IMR-90 (cell line): ENCODE measurements at regions of chr1 and their contacts with region 1.

Region 1: GRCh38 chr1:171313835-171314320 is at the start of gene FMO4:
- DNase-seq: peak; percentile 99
- ATAC-seq: peak; percentile 100
- H3K4me3 ChIP-seq: no peak within 1 kb of the TSS
- H3K27ac ChIP-seq: no peak within 1 kb of the TSS
- H3K4me1 ChIP-seq: 0 out of 2 replicates have a peak, but pooled peaks cover 2% of the 10 kb centered on the region
- H3K27me3 ChIP-seq: no peaks in the 10 kb centered on the region
- CTCF ChIP-seq: peak; percentile 92
- POLR2A ChIP-seq: no peak
- RAD21 ChIP-seq: peak; percentile 62
- total RNA-seq, gene FMO4: 0.36 and 0.56 TPM in 2 replicates

Region 2: GRCh38 chr1:170967042-170967910 is 346.6 kb before region 1 on chr1:
- CTCF ChIA-PET with region 1: interaction called, 26 read pairs
- POLR2A ChIA-PET with region 1: no interaction called
- dilution Hi-C with region 1: no loop called
- in situ Hi-C with region 1: no loop called
- intact Hi-C with region 1: loop called (anchors 1 kb)
- DNase-seq: peak; percentile 63
- ATAC-seq: peak; percentile 94
- H3K4me3 ChIP-seq: no peak overlapping the region
- H3K27ac ChIP-seq: no peak overlapping the region
- H3K4me1 ChIP-seq: no peaks in the 10 kb centered on the region
- H3K27me3 ChIP-seq: no peaks in the 10 kb centered on the region
- CTCF ChIP-seq: peak; percentile 68
- POLR2A ChIP-seq: no peak
- RAD21 ChIP-seq: peak; percentile 60

Region 3: GRCh38 chr1:171141688-171142415 is 172.0 kb before region 1 on chr1:
- CTCF ChIA-PET with region 1: no interaction called
- POLR2A ChIA-PET with region 1: no interaction called
- dilution Hi-C with region 1: no loop called
- in situ Hi-C with region 1: no loop called
- intact Hi-C with region 1: loop called (anchors 5 kb)
- DNase-seq: peak; percentile 96
- ATAC-seq: peak; percentile 93
- H3K4me3 ChIP-seq: no peak overlapping the region
- H3K27ac ChIP-seq: peak overlapping the region; percentile 86
- H3K4me1 ChIP-seq: peaks cover 13% of the 10 kb centered on the region
- H3K27me3 ChIP-seq: no peaks in the 10 kb centered on the region
- CTCF ChIP-seq: peak; percentile 44
- POLR2A ChIP-seq: no peak
- RAD21 ChIP-seq: no peak; the same call in 1 of the 2 replicates

Region 4: GRCh38 chr1:171173069-171173468 is 140.8 kb before region 1 on chr1:
- CTCF ChIA-PET with region 1: interaction called, 3 read pairs
- POLR2A ChIA-PET with region 1: no interaction called
- dilution Hi-C with region 1: no loop called
- in situ Hi-C with region 1: no loop called
- intact Hi-C with region 1: loop called (anchors 5 kb)
- DNase-seq: no peak
- ATAC-seq: peak; percentile 46
- H3K4me3 ChIP-seq: no peak overlapping the region
- H3K27ac ChIP-seq: peak overlapping the region; percentile 81; the same call in 1 of the 2 replicates
- H3K4me1 ChIP-seq: no peaks in the 10 kb centered on the region; the same call in 1 of the 2 replicates
- H3K27me3 ChIP-seq: no peaks in the 10 kb centered on the region
- CTCF ChIP-seq: no peak
- POLR2A ChIP-seq: no peak
- RAD21 ChIP-seq: no peak

Region 5: DNA sequence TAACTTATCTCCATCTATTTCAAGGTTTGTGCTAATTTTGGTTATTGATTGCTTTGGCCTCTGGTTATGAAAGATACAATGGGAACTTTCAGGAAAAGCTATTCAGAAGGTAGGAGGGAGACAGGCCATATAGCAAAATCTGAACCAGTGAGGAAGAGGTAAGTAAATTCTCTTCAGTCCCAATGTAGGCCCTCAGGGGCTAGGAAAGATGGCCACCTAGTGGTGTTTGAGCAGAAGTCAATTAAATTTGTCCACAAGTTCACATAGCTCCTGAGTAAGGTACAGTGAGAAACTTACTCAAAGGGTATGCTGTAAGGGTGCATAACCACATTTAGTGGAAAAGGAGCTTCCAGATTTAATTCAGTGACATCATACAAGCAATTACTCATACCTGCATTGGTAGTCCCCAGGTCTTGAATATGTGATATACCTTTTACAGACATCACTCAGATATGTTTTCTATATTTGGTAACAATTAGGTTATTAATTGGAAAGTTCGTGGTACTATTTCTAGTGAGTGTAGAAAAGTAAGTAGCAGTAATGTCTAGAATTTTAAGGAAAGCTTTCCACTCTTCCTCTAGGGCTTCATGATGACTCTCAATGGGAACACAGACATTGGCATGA is 87.0 kb before region 1 on chr1:
- CTCF ChIA-PET with region 1: interaction called, 5 read pairs
- POLR2A ChIA-PET with region 1: no interaction called
- dilution Hi-C with region 1: no loop called
- in situ Hi-C with region 1: no loop called
- intact Hi-C with region 1: loop called (anchors 5 kb)
- DNase-seq: peak; percentile 80
- ATAC-seq: peak; percentile 93
- H3K4me3 ChIP-seq: no peak overlapping the region
- H3K27ac ChIP-seq: no peak overlapping the region
- H3K4me1 ChIP-seq: peaks cover 2% of the 10 kb centered on the region
- H3K27me3 ChIP-seq: no peaks in the 10 kb centered on the region
- CTCF ChIP-seq: peak; percentile 95
- POLR2A ChIP-seq: no peak
- RAD21 ChIP-seq: peak; percentile 99

Region 6: GRCh38 chr1:171251042-171251951 is 62.6 kb before region 1 on chr1:
- CTCF ChIA-PET with region 1: no interaction called
- POLR2A ChIA-PET with region 1: no interaction called
- dilution Hi-C with region 1: no loop called
- in situ Hi-C with region 1: no loop called
- intact Hi-C with region 1: loop called (anchors 2 kb)
- DNase-seq: peak; percentile 33
- ATAC-seq: peak; percentile 83
- H3K4me3 ChIP-seq: peak overlapping the region; percentile 69
- H3K27ac ChIP-seq: no peak overlapping the region
- H3K4me1 ChIP-seq: 0 out of 2 replicates have a peak, but pooled peaks cover 2% of the 10 kb centered on the region
- H3K27me3 ChIP-seq: no peaks in the 10 kb centered on the region; the same call in none of the 2 replicates
- CTCF ChIP-seq: peak; percentile 62
- POLR2A ChIP-seq: no peak
- RAD21 ChIP-seq: peak; percentile 37

Region 7: DNA sequence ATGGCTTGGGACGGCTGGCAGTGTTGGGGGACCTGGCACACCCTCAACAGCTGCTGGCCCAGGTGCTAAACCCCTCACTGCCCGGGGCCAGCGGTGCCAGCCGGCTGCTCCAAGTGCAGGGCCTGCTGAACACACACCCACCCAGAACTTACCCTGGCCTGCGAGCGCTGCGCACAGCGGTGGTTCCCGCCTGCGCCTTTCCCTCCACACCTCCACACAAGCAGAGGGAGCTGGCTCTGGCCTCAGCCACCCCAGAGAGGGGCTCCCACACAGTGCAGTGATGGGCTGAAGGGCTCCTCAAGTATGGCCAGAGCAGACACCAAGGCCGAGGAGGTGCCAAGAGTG is 68.0 kb after region 1 on chr1:
- CTCF ChIA-PET with region 1: no interaction called
- POLR2A ChIA-PET with region 1: no interaction called
- dilution Hi-C with region 1: no loop called
- in situ Hi-C with region 1: no loop called
- intact Hi-C with region 1: no loop called
- DNase-seq: no peak
- ATAC-seq: no peak
- H3K4me3 ChIP-seq: no peak overlapping the region
- H3K27ac ChIP-seq: no peak overlapping the region
- H3K4me1 ChIP-seq: no peaks in the 10 kb centered on the region
- H3K27me3 ChIP-seq: no peaks in the 10 kb centered on the region
- CTCF ChIP-seq: no peak
- POLR2A ChIP-seq: no peak
- RAD21 ChIP-seq: no peak

Region 8: GRCh38 chr1:171485375-171486047 is 171.6 kb after region 1 on chr1 and contains the start of gene PRRC2C:
- CTCF ChIA-PET with region 1: interaction called, 5 read pairs
- POLR2A ChIA-PET with region 1: no interaction called
- dilution Hi-C with region 1: no loop called
- in situ Hi-C with region 1: no loop called
- intact Hi-C with region 1: loop called (anchors 2 kb)
- DNase-seq: peak; percentile 98
- ATAC-seq: peak; percentile 97
- H3K4me3 ChIP-seq: peak within 1 kb of the TSS; percentile 87
- H3K27ac ChIP-seq: peak within 1 kb of the TSS; percentile 91
- H3K4me1 ChIP-seq: peaks cover 2% of the 10 kb centered on the region; the same call in 1 of the 2 replicates
- H3K27me3 ChIP-seq: no peaks in the 10 kb centered on the region
- CTCF ChIP-seq: peak; percentile 95
- POLR2A ChIP-seq: peak; percentile 87
- RAD21 ChIP-seq: peak; percentile 79
- total RNA-seq, gene PRRC2C: 58.3 and 66.4 TPM in 2 replicates